ENCODE measurements at regions of chr6 and their contacts with region 1.

Region 1: GRCh38 chr6:14520536-14520935 is 403.0 kb downstream of the CD83 start:
- DNase-seq: no peak
- H3K4me3 Mint-ChIP-seq: no peak overlapping the region
- H3K27ac Mint-ChIP-seq: no peak overlapping the region
- H3K4me1 Mint-ChIP-seq: peaks cover 2% of the 10 kb centered on the region
- H3K27me3 Mint-ChIP-seq: no peaks in the 10 kb centered on the region

Region 2: GRCh38 chr6:14464055-14464454 is 56.5 kb before region 1 on chr6:
- CTCF ChIA-PET with region 1: no interaction called
- POLR2A ChIA-PET with region 1: no interaction called
- DNase-seq: no peak
- H3K4me3 Mint-ChIP-seq: no peak overlapping the region
- H3K27ac Mint-ChIP-seq: no peak overlapping the region
- H3K4me1 Mint-ChIP-seq: peaks cover 23% of the 10 kb centered on the region
- H3K27me3 Mint-ChIP-seq: no peaks in the 10 kb centered on the region

Region 3: GRCh38 chr6:14542670-14543366 is 22.3 kb after region 1 on chr6:
- CTCF ChIA-PET with region 1: interaction called, 4 read pairs
- POLR2A ChIA-PET with region 1: interaction called, 15 read pairs
- DNase-seq: no peak
- H3K4me3 Mint-ChIP-seq: no peak overlapping the region
- H3K27ac Mint-ChIP-seq: no peak overlapping the region
- H3K4me1 Mint-ChIP-seq: peaks cover 22% of the 10 kb centered on the region
- H3K27me3 Mint-ChIP-seq: no peaks in the 10 kb centered on the region

Measured in activated CD4-positive, alpha-beta T cell treated with anti-CD3 and anti-CD28 coated beads, Interleukin-2, amount 10 ng/mL, durations not matched to agents 7 days and 5 days (primary cell).